ENCODE measurements at regions of chr4 and their contacts with region 1.

Region 1: DNA sequence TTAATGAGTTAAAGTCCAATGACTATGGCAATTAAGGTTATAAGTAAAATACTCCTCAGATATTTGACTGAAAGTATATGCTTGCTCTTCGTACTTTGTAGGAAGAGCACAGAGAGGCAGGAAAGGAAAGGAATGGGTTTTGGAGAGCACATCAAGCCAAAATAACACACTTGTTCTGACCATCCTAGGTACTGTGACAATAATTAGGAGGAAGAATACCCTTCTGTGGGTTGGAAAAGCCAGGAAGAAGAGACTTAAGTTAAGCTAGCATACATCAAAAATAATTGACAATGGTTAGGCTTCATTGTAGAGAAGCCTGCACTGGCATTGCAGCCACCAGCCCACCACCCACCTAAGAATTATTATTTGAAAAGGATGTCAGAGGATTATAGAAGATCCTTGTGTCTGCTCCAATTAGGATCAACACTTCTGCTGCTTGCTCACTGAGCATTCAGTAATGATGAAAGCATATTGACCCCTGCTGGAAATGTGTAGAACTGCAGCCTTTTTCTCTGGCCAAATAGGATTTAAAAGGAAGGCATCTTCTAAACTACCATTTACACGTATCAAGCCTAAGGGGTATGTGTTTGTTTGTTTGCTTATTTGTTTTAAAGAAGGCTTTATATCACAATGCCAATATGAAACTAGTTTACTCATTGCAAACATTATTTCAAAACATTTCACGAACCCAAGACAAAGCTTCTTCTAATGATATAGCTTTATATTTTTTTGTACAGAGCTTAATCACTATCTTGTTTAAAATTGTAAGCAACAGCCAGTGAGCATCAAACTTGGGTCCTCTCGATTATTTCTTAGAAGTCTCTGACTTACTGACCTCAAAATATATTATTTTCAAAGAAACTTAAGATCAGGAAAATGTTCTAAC is 286.2 kb upstream of the TET2 start:
- DNase-seq: peak in 4 of 10 donors; percentile 33 to 84 (median 46)
- H3K4me3 ChIP-seq: peak overlapping the region in 10 of 59 donors; percentile 4 to 36 (median 14)
- H3K27ac ChIP-seq: peak overlapping the region in 27 of 59 donors; percentile 0 to 61 (median 28)
- H3K27me3 ChIP-seq: no peaks in the 10 kb centered on the region
- CTCF ChIP-seq: peak; percentile 86 to 98 (median 93)

Region 2: GRCh38 chr4:103996637-103997036 is 863.8 kb before region 1 on chr4:
- intact Hi-C with region 1: loop called in 1 of 2 experiments (anchors 5 kb)
- DNase-seq: peak in 5 of 10 donors; percentile 16 to 65 (median 47)
- H3K4me3 ChIP-seq: peak overlapping the region in 28 of 59 donors; percentile 0 to 44 (median 20)
- H3K27ac ChIP-seq: peak overlapping the region in 29 of 59 donors; percentile 2 to 80 (median 45)
- H3K27me3 ChIP-seq: no peaks in the 10 kb centered on the region
- CTCF ChIP-seq: no peak

Region 3: GRCh38 chr4:104010722-104011121 is 849.8 kb before region 1 on chr4:
- intact Hi-C with region 1: loop called (anchors 5 kb)
- DNase-seq: no peak
- H3K4me3 ChIP-seq: no peak overlapping the region
- H3K27ac ChIP-seq: no peak overlapping the region
- H3K27me3 ChIP-seq: no peaks in the 10 kb centered on the region
- CTCF ChIP-seq: no peak

Region 4: DNA sequence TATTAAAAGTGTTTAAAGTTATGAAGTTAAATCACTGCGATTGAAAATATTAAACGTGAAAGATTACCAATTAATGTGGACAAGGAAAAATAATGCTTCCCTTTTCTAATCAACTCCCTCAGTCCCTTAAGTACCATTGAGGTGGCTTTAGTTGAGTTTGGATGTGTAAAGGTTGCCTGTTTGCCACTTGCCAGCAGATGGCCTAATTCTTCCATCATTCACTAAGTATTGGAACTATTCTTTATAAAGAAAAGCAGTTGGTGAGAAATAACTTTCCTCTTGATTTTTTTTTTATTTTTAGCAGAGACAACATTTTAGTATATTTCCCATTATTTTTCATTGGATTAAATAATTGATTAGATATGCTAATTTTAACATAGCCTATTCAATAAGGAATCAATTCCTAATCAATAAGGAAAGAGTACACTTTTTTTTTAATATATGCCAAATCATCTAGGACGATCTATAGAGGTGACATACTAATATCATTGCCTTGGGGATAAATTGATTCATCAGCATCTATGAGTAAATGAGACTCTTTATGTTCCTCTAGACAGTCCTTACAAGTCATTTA is 844.7 kb before region 1 on chr4:
- intact Hi-C with region 1: loop called (anchors 5 kb)
- DNase-seq: peak in 1 of 10 donors; percentile 49
- H3K4me3 ChIP-seq: no peak overlapping the region
- H3K27ac ChIP-seq: no peak overlapping the region
- H3K27me3 ChIP-seq: no peaks in the 10 kb centered on the region
- CTCF ChIP-seq: peak; percentile 21 to 84 (median 66)

Region 5: GRCh38 chr4:104064646-104065577 is 795.6 kb before region 1 on chr4:
- intact Hi-C with region 1: loop called in 1 of 2 experiments (anchors 5 kb)
- DNase-seq: peak; percentile 11 to 81 (median 64)
- H3K4me3 ChIP-seq: peak overlapping the region in 38 of 59 donors; percentile 1 to 48 (median 19)
- H3K27ac ChIP-seq: peak overlapping the region in 17 of 59 donors; percentile 10 to 66 (median 29)
- H3K27me3 ChIP-seq: no peaks in the 10 kb centered on the region
- CTCF ChIP-seq: peak; percentile 62 to 94 (median 80)

Region 6: GRCh38 chr4:104408878-104409277 is 451.6 kb before region 1 on chr4:
- intact Hi-C with region 1: loop called in 1 of 2 experiments (anchors 10 kb)
- DNase-seq: no peak
- H3K4me3 ChIP-seq: no peak overlapping the region
- H3K27ac ChIP-seq: no peak overlapping the region
- H3K27me3 ChIP-seq: no peaks in the 10 kb centered on the region
- CTCF ChIP-seq: no peak

Region 7: GRCh38 chr4:104966349-104967033 is 106.0 kb after region 1 on chr4:
- intact Hi-C with region 1: no loop called
- DNase-seq: no peak
- H3K4me3 ChIP-seq: no peak overlapping the region
- H3K27ac ChIP-seq: no peak overlapping the region
- H3K27me3 ChIP-seq: peaks cover 0 to 6% (median 0%) of the 10 kb centered on the region in 45 donors
- CTCF ChIP-seq: no peak